ENCODE measurements at regions of chr22 and their contacts with region 1.

Region 1: DNA sequence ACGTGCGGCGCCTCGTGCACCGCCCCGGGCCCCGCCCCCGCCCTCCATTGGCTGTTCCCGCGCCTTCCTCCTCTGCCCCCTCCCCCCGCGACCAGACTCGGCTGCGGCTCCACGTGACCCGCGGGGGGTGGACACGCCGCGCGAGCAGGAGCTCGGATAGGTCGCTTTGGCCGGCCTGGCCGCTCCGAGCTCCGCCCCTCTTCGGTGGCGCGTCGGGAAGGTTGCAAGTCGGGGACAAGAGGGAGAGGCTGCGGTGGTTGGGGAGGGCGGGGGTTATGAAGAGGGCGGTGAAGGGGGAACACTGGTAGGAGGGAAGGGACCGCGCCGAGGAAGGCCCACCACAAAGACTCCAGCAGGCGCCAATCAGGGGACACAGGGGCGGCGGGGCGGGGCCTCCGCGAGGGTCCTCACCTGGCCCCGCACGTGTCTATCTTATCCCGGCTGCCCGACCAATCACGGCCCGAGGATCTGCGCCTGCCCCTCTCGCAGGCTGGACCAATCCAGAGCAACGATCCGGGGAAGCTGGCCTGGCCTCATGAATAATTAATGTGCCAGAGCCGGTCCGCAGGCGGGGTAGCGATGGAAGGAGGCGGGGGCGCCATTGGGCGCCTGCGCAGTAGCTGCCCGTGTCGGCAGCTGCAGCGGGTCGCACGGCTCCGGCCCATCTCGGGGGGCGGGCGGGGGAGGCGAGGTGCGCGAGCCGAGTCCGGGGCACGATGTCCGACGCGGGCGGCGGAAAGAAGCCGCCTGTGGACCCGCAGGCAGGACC is at the start of gene TEF:
- DNase-seq: peak; percentile 91
- H3K4me3 ChIP-seq: peak within 1 kb of the TSS; percentile 79
- CTCF ChIP-seq: no peak

Region 2: DNA sequence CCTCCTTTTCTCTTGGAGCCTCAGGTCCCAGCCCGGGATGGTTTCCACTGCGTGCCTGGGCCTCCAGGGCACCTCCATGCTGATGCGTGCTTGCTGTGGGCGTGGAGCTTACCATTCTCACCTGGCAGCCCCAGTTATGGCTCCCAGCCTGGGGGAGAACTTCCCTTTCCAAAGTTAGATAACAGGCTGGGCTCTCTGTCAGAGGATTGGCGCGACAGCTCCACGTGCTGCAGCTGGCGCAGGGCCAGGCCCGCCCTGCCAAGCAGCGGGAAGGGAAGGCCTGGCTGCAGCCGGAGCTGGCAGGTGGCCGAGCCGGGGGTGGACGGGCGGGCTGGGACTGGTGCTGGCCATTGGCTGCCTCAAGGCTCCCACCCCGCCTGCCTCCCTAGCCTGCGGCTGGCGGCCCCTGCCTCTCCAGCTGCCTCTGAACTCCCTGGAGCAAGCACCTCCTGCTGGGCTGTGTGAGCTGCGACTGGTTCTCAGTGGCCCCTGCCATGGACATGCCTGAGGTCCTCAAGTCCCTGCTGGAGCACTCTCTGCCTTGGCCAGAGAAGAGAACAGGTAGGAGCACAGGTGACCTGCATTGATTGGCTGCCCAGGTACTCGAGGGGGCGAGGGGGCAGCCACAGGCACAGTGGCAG is 14.4 kb before region 1 on chr22:
- CTCF ChIA-PET with region 1: interaction called, 9 read pairs
- POLR2A ChIA-PET with region 1: interaction called, 16 read pairs
- DNase-seq: peak; percentile 56
- H3K4me3 ChIP-seq: peak overlapping the region; percentile 41
- CTCF ChIP-seq: peak; percentile 48